Activated CD4-positive, alpha-beta T cell treated with anti-CD3 and anti-CD28 coated beads for 36 hours (primary cell): ENCODE measurements at regions of chr17 and their contacts with region 1.

Region 1: DNA sequence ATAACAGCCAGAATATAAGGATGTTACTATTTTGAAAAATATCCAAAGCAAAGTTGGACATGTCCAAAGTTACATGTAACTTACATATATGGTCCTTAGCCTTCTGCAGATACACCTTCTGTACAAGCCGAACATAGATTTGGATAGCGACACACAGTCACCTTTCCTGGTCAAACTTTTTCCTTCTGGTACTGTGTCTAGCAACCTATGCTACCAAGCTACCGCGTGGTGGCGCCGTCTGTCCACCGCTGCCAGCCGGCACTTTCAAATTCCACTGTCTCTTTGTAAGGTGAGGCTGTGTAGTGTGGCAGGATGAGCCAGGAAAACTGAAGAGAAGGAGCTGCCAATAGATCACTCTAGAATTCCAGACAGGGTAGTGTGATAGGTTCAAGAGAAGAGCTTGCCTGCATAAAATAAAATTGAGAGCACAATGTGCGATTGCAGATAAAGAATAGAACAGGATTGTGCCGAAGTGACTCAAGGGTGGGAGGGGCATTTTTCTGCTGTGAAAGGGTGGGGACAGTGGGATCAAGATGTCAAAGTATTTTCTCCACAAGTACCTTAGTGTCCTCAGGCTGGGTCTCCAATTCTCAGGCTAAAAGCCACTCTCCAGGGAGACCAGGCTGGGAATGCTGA is 366.9 kb downstream of the SLC39A11 start:
- DNase-seq: peak; percentile 75
- ATAC-seq: peak; percentile 50
- H3K4me3 Mint-ChIP-seq: no peak overlapping the region
- H3K27ac Mint-ChIP-seq: peak overlapping the region; percentile 76
- H3K4me1 Mint-ChIP-seq: peaks cover 36% of the 10 kb centered on the region
- H3K27me3 Mint-ChIP-seq: no peaks in the 10 kb centered on the region

Region 2: GRCh38 chr17:72639711-72640110 is 85.8 kb before region 1 on chr17:
- CTCF ChIA-PET with region 1: no interaction called
- POLR2A ChIA-PET with region 1: no interaction called
- intact Hi-C with region 1: no loop called
- DNase-seq: no peak
- ATAC-seq: no peak
- H3K4me3 Mint-ChIP-seq: no peak overlapping the region
- H3K27ac Mint-ChIP-seq: no peak overlapping the region
- H3K4me1 Mint-ChIP-seq: peaks cover 8% of the 10 kb centered on the region
- H3K27me3 Mint-ChIP-seq: peaks cover 5% of the 10 kb centered on the region

Region 3: GRCh38 chr17:72985881-72986720 is 260.6 kb after region 1 on chr17:
- CTCF ChIA-PET with region 1: interaction called, 9 read pairs
- POLR2A ChIA-PET with region 1: no interaction called
- intact Hi-C with region 1: loop called (anchors 1 kb)
- DNase-seq: peak; percentile 70
- ATAC-seq: peak; percentile 79
- H3K4me3 Mint-ChIP-seq: no peak overlapping the region
- H3K27ac Mint-ChIP-seq: no peak overlapping the region
- H3K4me1 Mint-ChIP-seq: peaks cover 1% of the 10 kb centered on the region
- H3K27me3 Mint-ChIP-seq: no peaks in the 10 kb centered on the region

Region 4: DNA sequence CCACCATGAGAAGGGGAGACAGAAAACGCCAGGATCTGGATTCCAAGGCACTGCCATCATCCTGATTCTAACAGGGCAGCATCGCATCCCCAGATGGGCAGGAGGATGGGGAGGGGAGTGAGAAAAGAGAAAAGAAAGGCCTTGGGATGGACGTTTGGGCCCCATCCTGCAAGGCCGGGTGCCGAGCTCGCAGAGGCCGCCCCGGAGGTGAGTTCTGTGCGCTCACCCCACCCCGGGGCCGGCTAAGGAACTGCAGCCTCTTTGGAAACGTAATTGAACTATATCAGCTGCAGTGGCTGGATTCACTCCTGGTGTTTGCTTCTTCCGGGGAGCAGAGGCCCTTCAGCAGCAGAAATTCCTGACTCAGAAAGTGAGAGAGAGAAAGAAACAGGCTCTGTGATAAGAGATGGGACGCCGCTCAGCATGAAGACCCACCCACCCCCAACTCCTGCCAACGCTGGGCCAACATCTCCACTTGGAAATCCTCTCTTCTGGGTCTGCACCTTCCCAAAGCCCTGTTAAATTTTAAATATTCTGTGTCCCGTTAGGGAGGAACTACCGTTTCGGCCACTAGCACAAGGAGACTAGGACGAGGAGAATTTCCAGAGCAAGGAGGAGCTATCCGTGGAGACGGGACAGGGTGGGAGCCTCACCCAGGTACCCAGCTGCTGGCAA is 430.8 kb after region 1 on chr17:
- CTCF ChIA-PET with region 1: interaction called, 82 read pairs
- POLR2A ChIA-PET with region 1: no interaction called
- intact Hi-C with region 1: loop called (anchors 1 kb)
- DNase-seq: peak; percentile 81
- ATAC-seq: peak; percentile 87
- H3K4me3 Mint-ChIP-seq: no peak overlapping the region
- H3K27ac Mint-ChIP-seq: no peak overlapping the region
- H3K4me1 Mint-ChIP-seq: peaks cover 14% of the 10 kb centered on the region
- H3K27me3 Mint-ChIP-seq: peaks cover 17% of the 10 kb centered on the region

Region 5: GRCh38 chr17:73255671-73256181 is 530.2 kb after region 1 on chr17:
- CTCF ChIA-PET with region 1: interaction called, 6 read pairs
- POLR2A ChIA-PET with region 1: no interaction called
- intact Hi-C with region 1: loop called (anchors 2 to 5 kb)
- DNase-seq: peak; percentile 75
- ATAC-seq: peak; percentile 92
- H3K4me3 Mint-ChIP-seq: no peak overlapping the region
- H3K27ac Mint-ChIP-seq: no peak overlapping the region
- H3K4me1 Mint-ChIP-seq: no peaks in the 10 kb centered on the region
- H3K27me3 Mint-ChIP-seq: no peaks in the 10 kb centered on the region

Region 6: GRCh38 chr17:73371285-73371684 is 645.7 kb after region 1 on chr17:
- CTCF ChIA-PET with region 1: interaction called, 73 read pairs
- POLR2A ChIA-PET with region 1: interaction called, 3 read pairs
- intact Hi-C with region 1: loop called (anchors 1 to 2 kb)
- DNase-seq: no peak
- ATAC-seq: no peak
- H3K4me3 Mint-ChIP-seq: no peak overlapping the region
- H3K27ac Mint-ChIP-seq: no peak overlapping the region
- H3K4me1 Mint-ChIP-seq: no peaks in the 10 kb centered on the region
- H3K27me3 Mint-ChIP-seq: no peaks in the 10 kb centered on the region